ENCODE measurements at regions of chr18 and their contacts with region 1.

Region 1: GRCh38 chr18:35972197-35973052 is at the start of gene RMP24:
- DNase-seq: peak; percentile 87 to 96 (median 92)
- H3K4me3 ChIP-seq: peak within 1 kb of the TSS; percentile 49 to 99 (median 91)
- H3K27ac ChIP-seq: peak within 1 kb of the TSS; percentile 81 to 99 (median 95)
- H3K27me3 ChIP-seq: no peaks in the 10 kb centered on the region
- CTCF ChIP-seq: peak in 37 of 56 donors; percentile 9 to 64 (median 31)

Region 2: DNA sequence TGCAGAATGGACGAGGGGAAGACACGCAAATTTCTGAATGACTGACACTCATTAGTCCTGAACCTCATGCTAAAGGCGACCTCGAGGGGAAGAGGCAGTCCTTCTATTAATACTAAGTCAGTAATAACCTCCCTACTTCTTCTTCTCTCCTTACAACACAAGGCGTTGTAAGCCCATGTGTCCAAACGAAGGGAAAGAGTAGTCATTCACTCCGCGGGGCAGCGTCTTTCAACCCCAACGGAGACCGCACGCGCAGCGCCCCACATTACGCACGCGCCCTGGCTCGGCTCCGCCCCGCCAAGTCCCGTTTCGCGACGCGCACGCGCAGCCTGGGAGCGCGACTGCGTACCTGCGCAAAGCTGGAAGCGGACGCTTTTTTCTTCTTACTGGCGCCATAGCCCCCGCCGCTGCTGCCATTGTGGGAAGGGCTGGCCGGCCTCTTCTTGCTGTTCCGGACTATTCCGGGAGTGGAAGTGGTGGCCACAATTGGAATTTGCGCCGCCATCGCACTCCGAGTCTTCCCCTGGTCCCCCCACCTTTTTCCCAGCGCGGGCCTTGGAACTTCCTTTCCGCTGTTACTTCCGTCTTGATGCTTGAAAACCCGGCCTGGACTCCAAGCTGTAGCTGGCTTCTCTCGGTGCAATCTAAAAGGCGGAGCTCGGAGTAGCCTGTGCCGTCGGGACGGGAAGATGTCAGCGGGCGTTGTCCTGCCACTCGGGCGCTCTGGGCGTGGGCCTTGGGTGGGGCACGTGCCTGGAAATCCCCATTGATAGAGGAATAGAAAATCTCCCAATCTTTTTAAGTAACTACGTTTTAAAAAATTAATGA is 474.8 kb before region 1 on chr18 and contains the start of gene INO80C:
- intact Hi-C with region 1: loop called (anchors 5 kb)
- DNase-seq: peak; percentile 73 to 91 (median 88)
- H3K4me3 ChIP-seq: peak within 1 kb of the TSS; percentile 52 to 92 (median 76)
- H3K27ac ChIP-seq: peak within 1 kb of the TSS; percentile 75 to 99 (median 94)
- H3K27me3 ChIP-seq: no peaks in the 10 kb centered on the region
- CTCF ChIP-seq: peak in 34 of 56 donors; percentile 5 to 51 (median 20)
- total RNA-seq, gene INO80C: 13.8 to 40.5 (median 27.1) TPM

Region 3: GRCh38 chr18:35695803-35696202 is 276.6 kb before region 1 on chr18:
- intact Hi-C with region 1: loop called in 1 of 2 experiments (anchors 10 kb)
- DNase-seq: peak; percentile 55 to 89 (median 83)
- H3K4me3 ChIP-seq: peak overlapping the region in 4 of 59 donors; percentile 1 to 23 (median 5)
- H3K27ac ChIP-seq: peak overlapping the region in 56 of 59 donors; percentile 2 to 81 (median 59)
- H3K27me3 ChIP-seq: no peaks in the 10 kb centered on the region
- CTCF ChIP-seq: peak in 6 of 56 donors; percentile 9 to 31 (median 22)

Region 4: GRCh38 chr18:36067055-36067957 is 94.9 kb after region 1 on chr18 and contains the start of gene RPRD1A:
- intact Hi-C with region 1: loop called in 1 of 2 experiments (anchors 5 kb)
- DNase-seq: peak; percentile 96 to 99 (median 98)
- H3K4me3 ChIP-seq: peak within 1 kb of the TSS; percentile 64 to 99 (median 93)
- H3K27ac ChIP-seq: peak within 1 kb of the TSS; percentile 6 to 96 (median 87)
- H3K27me3 ChIP-seq: no peaks in the 10 kb centered on the region
- CTCF ChIP-seq: peak in 33 of 56 donors; percentile 8 to 55 (median 33)
- total RNA-seq, gene RPRD1A: 74.9 to 135 (median 105) TPM

Region 5: GRCh38 chr18:36129300-36130038 is 157.0 kb after region 1 on chr18 and contains the starts of genes ELP2 and SLC39A6:
- intact Hi-C with region 1: loop called (anchors 2 kb)
- DNase-seq: peak; percentile 94 to 98 (median 96)
- H3K4me3 ChIP-seq: peak within 1 kb of the TSS; percentile 67 to 100 (median 97)
- H3K27ac ChIP-seq: peak within 1 kb of the TSS; percentile 91 to 100 (median 99)
- H3K27me3 ChIP-seq: no peaks in the 10 kb centered on the region
- CTCF ChIP-seq: peak in 33 of 56 donors; percentile 6 to 56 (median 28)
- total RNA-seq, gene ELP2: 61.4 to 145 (median 105) TPM
- total RNA-seq, gene SLC39A6: 26.2 to 53.3 (median 36.5) TPM

Measured in dorsolateral prefrontal cortex (tissue), 120 donors.